Dorsolateral prefrontal cortex (tissue), 120 donors: ENCODE measurements at regions of chr20 and their contacts with region 1.

Region 1: DNA sequence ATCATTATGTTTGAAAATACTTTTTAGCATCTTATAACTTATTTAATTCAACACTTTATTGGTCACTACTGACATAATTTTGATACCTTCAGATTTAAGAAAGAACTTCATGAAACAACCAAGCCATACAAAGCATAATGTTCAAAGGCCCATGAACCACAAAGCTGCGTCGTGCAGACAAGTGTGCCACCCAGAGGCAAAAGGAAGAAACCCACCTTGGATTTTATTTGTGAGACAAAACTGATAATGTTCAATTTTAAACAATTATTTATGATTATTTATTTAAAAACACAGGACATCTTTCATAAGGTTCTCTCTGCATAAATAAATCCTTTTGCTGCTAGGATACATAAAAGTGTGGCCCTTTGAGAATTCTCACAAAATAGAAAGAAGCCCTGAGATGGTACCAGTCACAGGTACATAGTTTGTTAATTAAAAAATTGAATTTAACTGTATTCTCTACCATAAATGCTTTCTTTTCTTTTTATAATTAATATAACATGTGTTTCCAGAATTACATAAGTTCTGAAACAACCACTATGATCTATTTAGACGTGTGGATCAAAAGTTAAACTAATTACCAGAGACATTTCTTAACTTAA is 143.7 kb downstream of the RALGAPA2 start:
- DNase-seq: peak in 7 of 10 donors; percentile 30 to 62 (median 58)
- H3K4me3 ChIP-seq: no peak overlapping the region
- H3K27ac ChIP-seq: no peak overlapping the region
- H3K27me3 ChIP-seq: no peaks in the 10 kb centered on the region
- CTCF ChIP-seq: peak; percentile 61 to 99 (median 82)

Region 2: DNA sequence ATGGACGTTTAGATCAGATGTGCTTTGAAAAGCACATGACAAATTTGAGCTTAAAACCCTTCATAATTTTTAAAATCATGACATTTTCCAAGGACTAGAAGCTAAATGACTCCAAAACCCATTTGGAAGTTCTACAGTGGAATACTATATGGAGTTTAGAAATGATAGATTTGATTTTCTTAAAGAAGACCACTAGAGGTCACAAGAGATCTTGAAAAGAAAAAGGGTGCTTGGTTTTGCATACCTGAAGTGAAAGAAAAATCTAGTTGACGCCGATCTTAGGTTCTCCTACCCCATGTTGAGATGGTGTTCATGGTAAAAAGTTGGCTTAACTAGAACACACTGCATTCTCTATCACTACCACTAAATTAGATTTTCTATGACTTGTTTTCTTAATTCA is 484.9 kb before region 1 on chr20:
- intact Hi-C with region 1: loop called (anchors 5 to 10 kb)
- DNase-seq: no peak
- H3K4me3 ChIP-seq: peak overlapping the region in 11 of 59 donors; percentile 3 to 41 (median 30)
- H3K27ac ChIP-seq: peak overlapping the region in 4 of 59 donors; percentile 1 to 46 (median 36)
- H3K27me3 ChIP-seq: no peaks in the 10 kb centered on the region
- CTCF ChIP-seq: peak; percentile 44 to 86 (median 68)

Region 3: DNA sequence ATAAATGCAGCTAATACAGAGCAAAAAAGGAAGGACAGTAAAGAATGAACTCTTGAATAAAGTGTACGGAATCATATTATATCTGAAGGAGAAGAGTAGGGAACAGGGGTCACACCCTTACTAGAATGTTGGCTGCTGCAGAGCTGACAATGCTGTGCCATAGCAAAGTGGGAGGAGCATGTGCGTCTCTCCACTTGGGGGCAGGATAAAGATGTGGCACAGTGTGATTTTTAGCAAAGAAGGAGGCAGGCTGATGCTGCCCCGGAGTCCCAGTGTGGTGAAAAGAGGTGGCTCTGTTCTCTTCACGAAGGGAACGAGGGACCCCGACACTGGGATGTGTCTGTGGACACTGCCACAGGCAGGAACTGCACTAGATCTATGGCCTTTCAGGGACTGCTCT is 133.3 kb before region 1 on chr20:
- intact Hi-C with region 1: loop called in 1 of 2 experiments (anchors 5 kb)
- DNase-seq: peak in 3 of 10 donors; percentile 34 to 69 (median 52)
- H3K4me3 ChIP-seq: no peak overlapping the region
- H3K27ac ChIP-seq: peak overlapping the region in 13 of 59 donors; percentile 1 to 61 (median 30)
- H3K27me3 ChIP-seq: no peaks in the 10 kb centered on the region
- CTCF ChIP-seq: peak in 55 of 56 donors; percentile 18 to 82 (median 54)

Region 4: GRCh38 chr20:20452254-20452676 is 116.4 kb before region 1 on chr20:
- intact Hi-C with region 1: loop called in 1 of 2 experiments (anchors 5 kb)
- DNase-seq: peak; percentile 66 to 98 (median 96)
- H3K4me3 ChIP-seq: peak overlapping the region in 53 of 59 donors; percentile 2 to 55 (median 31)
- H3K27ac ChIP-seq: peak overlapping the region in 58 of 59 donors; percentile 20 to 92 (median 82)
- H3K27me3 ChIP-seq: no peaks in the 10 kb centered on the region
- CTCF ChIP-seq: peak in 41 of 56 donors; percentile 9 to 62 (median 32)

Region 5: DNA sequence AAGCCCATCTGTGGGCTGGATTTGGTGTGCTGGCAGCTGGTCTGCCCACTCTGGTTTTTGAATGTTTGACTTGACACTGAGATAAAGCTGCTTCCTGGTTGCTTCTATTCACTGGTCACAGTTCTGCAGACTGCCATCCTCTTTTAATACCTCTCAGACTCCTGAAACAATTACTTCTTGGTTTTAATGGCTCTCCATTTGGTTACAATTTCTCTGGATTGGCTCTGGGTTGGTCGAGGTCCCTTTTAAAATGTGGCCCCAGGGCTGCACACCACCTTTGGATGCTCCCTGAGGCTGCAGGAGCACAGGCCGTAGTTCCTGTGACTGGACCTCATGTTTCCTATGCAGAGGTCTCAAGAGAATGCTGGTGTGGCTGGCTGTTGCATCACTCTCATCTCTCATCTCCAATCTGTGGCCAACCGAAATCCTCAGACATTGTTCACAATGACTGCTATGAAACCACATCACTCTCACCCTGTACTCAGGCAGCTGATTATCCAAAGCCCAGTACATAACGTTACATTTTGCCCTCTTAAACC is 102.3 kb before region 1 on chr20:
- intact Hi-C with region 1: loop called in 1 of 2 experiments (anchors 5 kb)
- DNase-seq: no peak
- H3K4me3 ChIP-seq: no peak overlapping the region
- H3K27ac ChIP-seq: peak overlapping the region in 49 of 59 donors; percentile 6 to 84 (median 58)
- H3K27me3 ChIP-seq: no peaks in the 10 kb centered on the region
- CTCF ChIP-seq: no peak

Region 6: GRCh38 chr20:20664795-20665589 is 96.3 kb after region 1 on chr20:
- intact Hi-C with region 1: no loop called
- DNase-seq: no peak
- H3K4me3 ChIP-seq: no peak overlapping the region
- H3K27ac ChIP-seq: no peak overlapping the region
- H3K27me3 ChIP-seq: no peaks in the 10 kb centered on the region
- CTCF ChIP-seq: peak in 55 of 56 donors; percentile 20 to 78 (median 59)